Calu3 (cell line): ENCODE measurements at regions of chr17 and their contacts with region 1.

Region 1: GRCh38 chr17:40021451-40021971 is 6.3 kb downstream of the CSF3 start:
- DNase-seq: peak; percentile 88
- H3K4me3 Mint-ChIP-seq: no peak overlapping the region
- H3K27ac Mint-ChIP-seq: no peak overlapping the region
- H3K4me1 Mint-ChIP-seq: peaks cover 36% of the 10 kb centered on the region
- H3K27me3 Mint-ChIP-seq: peaks cover 23% of the 10 kb centered on the region
- CTCF ChIP-seq: no peak

Region 2: GRCh38 chr17:39687811-39688518 is 333.5 kb before region 1 on chr17 and contains the start of gene PGAP3:
- CTCF ChIA-PET with region 1: interaction called, 11 read pairs
- intact Hi-C with region 1: no loop called
- DNase-seq: peak; percentile 100
- H3K4me3 Mint-ChIP-seq: peak within 1 kb of the TSS; percentile 64
- H3K27ac Mint-ChIP-seq: peak within 1 kb of the TSS; percentile 63
- H3K4me1 Mint-ChIP-seq: peaks cover 27% of the 10 kb centered on the region
- H3K27me3 Mint-ChIP-seq: no peaks in the 10 kb centered on the region
- CTCF ChIP-seq: no peak
- total RNA-seq, gene PGAP3: 1,186 and 1,276 TPM in 2 replicates

Region 3: GRCh38 chr17:39972271-39972670 is 49.2 kb before region 1 on chr17:
- CTCF ChIA-PET with region 1: interaction called, 1,657 read pairs
- intact Hi-C with region 1: no loop called
- DNase-seq: no peak
- H3K4me3 Mint-ChIP-seq: no peak overlapping the region
- H3K27ac Mint-ChIP-seq: no peak overlapping the region
- H3K4me1 Mint-ChIP-seq: peaks cover 17% of the 10 kb centered on the region
- H3K27me3 Mint-ChIP-seq: peaks cover 84% of the 10 kb centered on the region
- CTCF ChIP-seq: no peak

Region 4: DNA sequence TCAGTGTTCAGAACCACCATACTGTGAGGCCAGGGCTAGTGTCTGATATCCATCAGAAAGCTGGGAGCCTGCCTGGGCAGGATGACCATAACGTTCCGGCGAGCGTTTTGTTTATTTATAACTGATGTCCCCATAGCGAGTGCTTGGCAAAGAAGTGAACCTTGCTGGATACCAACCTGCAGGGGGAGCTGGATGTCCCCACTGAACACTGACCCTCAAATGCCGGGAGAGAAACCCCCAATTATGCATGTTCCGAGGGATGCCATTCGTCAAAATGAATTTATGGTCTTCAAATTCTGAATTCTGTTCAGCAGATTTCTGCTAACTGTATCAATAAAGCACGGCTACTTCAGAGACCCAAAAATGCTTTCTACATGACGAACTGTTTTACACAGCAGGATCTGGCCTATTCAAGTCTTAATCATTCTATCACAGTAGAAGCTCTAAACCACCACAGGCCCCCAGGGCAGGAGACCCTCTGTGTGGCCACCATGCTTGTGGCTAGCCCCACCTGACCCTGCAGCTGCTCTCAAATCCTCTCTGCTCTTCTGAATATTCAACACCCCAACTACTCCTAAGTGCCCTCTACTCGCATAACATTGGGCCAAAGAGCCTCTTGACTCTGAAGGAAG is 17.5 kb after region 1 on chr17:
- CTCF ChIA-PET with region 1: interaction called, 774 read pairs
- intact Hi-C with region 1: no loop called
- DNase-seq: peak; percentile 92
- H3K4me3 Mint-ChIP-seq: no peak overlapping the region
- H3K27ac Mint-ChIP-seq: no peak overlapping the region
- H3K4me1 Mint-ChIP-seq: peaks cover 8% of the 10 kb centered on the region
- H3K27me3 Mint-ChIP-seq: no peaks in the 10 kb centered on the region
- CTCF ChIP-seq: no peak

Region 5: GRCh38 chr17:40068917-40069750 is 47.6 kb after region 1 on chr17:
- CTCF ChIA-PET with region 1: interaction called, 154 read pairs
- intact Hi-C with region 1: no loop called
- DNase-seq: peak; percentile 71
- H3K4me3 Mint-ChIP-seq: peak overlapping the region; percentile 63
- H3K27ac Mint-ChIP-seq: no peak overlapping the region
- H3K4me1 Mint-ChIP-seq: peaks cover 94% of the 10 kb centered on the region
- H3K27me3 Mint-ChIP-seq: no peaks in the 10 kb centered on the region
- CTCF ChIP-seq: no peak

Region 6: GRCh38 chr17:40086150-40087044 is 64.9 kb after region 1 on chr17:
- CTCF ChIA-PET with region 1: interaction called, 40 read pairs
- intact Hi-C with region 1: no loop called
- DNase-seq: peak; percentile 100
- H3K4me3 Mint-ChIP-seq: no peak overlapping the region
- H3K27ac Mint-ChIP-seq: no peak overlapping the region
- H3K4me1 Mint-ChIP-seq: no peaks in the 10 kb centered on the region
- H3K27me3 Mint-ChIP-seq: no peaks in the 10 kb centered on the region
- CTCF ChIP-seq: no peak